ENCODE measurements at regions of chr15 and their contacts with region 1.

Region 1: GRCh38 chr15:79923515-79924395 is 26.9 kb upstream of the MTHFS start:
- DNase-seq: peak; percentile 65 to 97 (median 80)

Region 2: GRCh38 chr15:79896637-79897379 is 26.9 kb before region 1 on chr15 and contains the start of gene MTHFS:
- intact Hi-C with region 1: loop called (anchors 2 kb)
- DNase-seq: peak; percentile 43 to 92 (median 60)

Measured in posterior cingulate gyrus (tissue), 11 donors.